ENCODE measurements at regions of chr5 and their contacts with region 1.

Region 1: DNA sequence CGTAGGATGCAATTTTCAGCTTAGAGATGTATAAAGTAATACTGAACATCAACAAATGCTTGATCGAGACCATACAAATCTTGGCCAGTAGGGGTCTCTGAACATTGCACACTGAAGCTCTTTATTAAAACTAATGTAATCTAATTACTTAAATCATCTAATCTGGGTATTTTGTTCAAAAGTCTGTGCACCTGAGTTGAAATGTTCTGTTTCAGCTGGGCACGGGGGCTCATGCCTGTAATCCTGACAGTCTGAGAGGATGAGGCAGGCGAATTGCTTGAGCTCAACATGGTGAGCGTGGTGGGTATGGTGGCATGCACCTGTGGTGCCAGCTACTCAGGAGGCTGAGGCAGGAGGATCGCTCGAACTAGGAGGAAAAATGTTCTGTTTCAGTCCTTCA is 41.0 kb downstream of the ESM1 start:
- DNase-seq: peak; percentile 45 to 54 (median 54)
- H3K4me3 ChIP-seq: no peak overlapping the region
- H3K4me3 Mint-ChIP-seq: no peak overlapping the region
- H3K27ac ChIP-seq: no peak overlapping the region
- H3K27ac Mint-ChIP-seq: no peak overlapping the region
- H3K4me1 ChIP-seq: no peaks in the 10 kb centered on the region
- H3K4me1 Mint-ChIP-seq: peaks cover 0 to 2% (median under 1%) of the 10 kb centered on the region in 4 donors
- H3K27me3 ChIP-seq: no peaks in the 10 kb centered on the region
- H3K27me3 Mint-ChIP-seq: no peaks in the 10 kb centered on the region

Region 2: GRCh38 chr5:54401515-54401914 is 542.8 kb before region 1 on chr5:
- CTCF ChIA-PET with region 1: no interaction called
- POLR2A ChIA-PET with region 1: no interaction called
- intact Hi-C with region 1: no loop called
- DNase-seq: no peak
- H3K4me3 ChIP-seq: no peak overlapping the region
- H3K4me3 Mint-ChIP-seq: no peak overlapping the region
- H3K27ac ChIP-seq: no peak overlapping the region
- H3K27ac Mint-ChIP-seq: no peak overlapping the region
- H3K4me1 ChIP-seq: no peaks in the 10 kb centered on the region
- H3K4me1 Mint-ChIP-seq: no peaks in the 10 kb centered on the region
- H3K27me3 ChIP-seq: no peaks in the 10 kb centered on the region
- H3K27me3 Mint-ChIP-seq: peaks cover 1 to 4% of the 10 kb centered on the region in 2 donors

Region 3: DNA sequence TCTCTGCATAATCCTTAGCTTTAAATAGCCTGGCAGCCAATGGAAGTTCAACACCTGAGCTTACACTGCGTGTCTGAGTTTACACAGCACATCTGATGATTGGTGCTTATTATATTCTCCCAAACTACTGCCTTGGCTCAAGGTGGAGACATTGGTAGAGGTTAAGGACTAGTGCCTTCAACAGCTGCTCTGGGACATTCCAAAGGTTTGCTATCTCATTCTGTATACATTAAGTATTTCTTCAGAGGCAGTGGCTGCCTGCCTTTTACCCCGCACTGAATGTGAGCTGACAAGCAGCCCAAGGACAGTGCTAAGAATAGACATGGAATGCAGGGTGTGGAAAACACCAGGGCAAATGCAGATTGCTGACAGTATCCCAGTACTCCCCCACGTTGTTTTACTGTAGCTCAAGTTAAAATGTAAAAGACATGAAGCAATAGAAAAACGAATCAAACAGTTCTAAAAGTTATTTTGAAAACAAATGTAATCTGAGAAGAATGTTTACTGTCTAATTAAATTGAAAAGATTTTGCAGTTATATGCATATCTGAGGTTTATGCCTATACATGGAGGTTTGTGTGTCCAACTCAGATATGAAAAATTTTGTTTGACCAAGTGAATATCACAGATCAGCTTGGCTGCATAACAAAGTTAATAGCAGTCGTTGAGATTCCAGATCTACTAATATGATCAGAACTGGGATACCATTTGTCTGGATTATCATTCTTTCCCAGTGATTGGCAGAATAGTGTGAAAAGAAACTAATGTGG is 487.1 kb before region 1 on chr5:
- CTCF ChIA-PET with region 1: no interaction called
- POLR2A ChIA-PET with region 1: no interaction called
- intact Hi-C with region 1: no loop called
- DNase-seq: no peak
- H3K4me3 ChIP-seq: no peak overlapping the region
- H3K4me3 Mint-ChIP-seq: no peak overlapping the region
- H3K27ac ChIP-seq: no peak overlapping the region
- H3K27ac Mint-ChIP-seq: no peak overlapping the region
- H3K4me1 ChIP-seq: no peaks in the 10 kb centered on the region
- H3K4me1 Mint-ChIP-seq: no peaks in the 10 kb centered on the region
- H3K27me3 ChIP-seq: no peaks in the 10 kb centered on the region
- H3K27me3 Mint-ChIP-seq: peaks cover 17 to 33% of the 10 kb centered on the region in 2 donors

Region 4: GRCh38 chr5:54930736-54931135 is 13.6 kb before region 1 on chr5:
- CTCF ChIA-PET with region 1: interaction called, 11 read pairs
- POLR2A ChIA-PET with region 1: no interaction called
- intact Hi-C with region 1: no loop called
- DNase-seq: no peak
- H3K4me3 ChIP-seq: no peak overlapping the region
- H3K4me3 Mint-ChIP-seq: no peak overlapping the region
- H3K27ac ChIP-seq: no peak overlapping the region
- H3K27ac Mint-ChIP-seq: no peak overlapping the region
- H3K4me1 ChIP-seq: no peaks in the 10 kb centered on the region
- H3K4me1 Mint-ChIP-seq: no peaks in the 10 kb centered on the region
- H3K27me3 ChIP-seq: peaks cover 9% of the 10 kb centered on the region
- H3K27me3 Mint-ChIP-seq: peaks cover 10 to 19% of the 10 kb centered on the region in 2 donors

Region 5: DNA sequence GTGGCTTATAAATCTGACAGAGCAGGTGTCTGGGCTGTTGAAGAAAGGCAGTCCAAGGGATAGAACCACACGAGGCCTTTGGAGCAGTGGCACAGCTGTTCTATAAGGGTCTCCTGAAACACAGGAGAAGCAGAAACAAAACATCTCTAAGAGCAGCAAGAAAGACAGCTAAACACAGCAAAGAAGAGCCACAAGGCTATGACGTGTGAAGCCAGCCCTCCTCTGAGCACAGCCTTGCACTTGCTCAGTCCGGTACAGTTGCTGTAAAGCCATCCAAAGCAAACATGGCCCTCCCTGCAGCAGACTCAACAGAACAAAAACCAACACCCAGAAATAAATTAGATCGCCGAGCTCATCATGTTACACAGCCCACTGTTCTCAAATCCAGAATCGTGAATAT is 77.0 kb after region 1 on chr5:
- CTCF ChIA-PET with region 1: interaction called, 24 read pairs
- POLR2A ChIA-PET with region 1: no interaction called
- intact Hi-C with region 1: no loop called
- DNase-seq: no peak
- H3K4me3 ChIP-seq: no peak overlapping the region
- H3K4me3 Mint-ChIP-seq: peak overlapping the region in 6 of 8 donors; percentile 3 to 71 (median 46)
- H3K27ac ChIP-seq: no peak overlapping the region
- H3K27ac Mint-ChIP-seq: peak overlapping the region in 6 of 7 donors; percentile 49 to 92 (median 77)
- H3K4me1 ChIP-seq: peaks cover 46% of the 10 kb centered on the region
- H3K4me1 Mint-ChIP-seq: peaks cover 31 to 65% (median 50%) of the 10 kb centered on the region in 4 donors
- H3K27me3 ChIP-seq: no peaks in the 10 kb centered on the region
- H3K27me3 Mint-ChIP-seq: no peaks in the 10 kb centered on the region

Region 6: GRCh38 chr5:55096861-55097260 is 152.5 kb after region 1 on chr5:
- CTCF ChIA-PET with region 1: interaction called, 92 read pairs
- POLR2A ChIA-PET with region 1: interaction called, 14 read pairs
- intact Hi-C with region 1: no loop called
- DNase-seq: peak; percentile 56 to 72 (median 63)
- H3K4me3 ChIP-seq: peak overlapping the region in 1 of 2 donors; percentile 47
- H3K4me3 Mint-ChIP-seq: peak overlapping the region; percentile 20 to 89 (median 69)
- H3K27ac ChIP-seq: no peak overlapping the region
- H3K27ac Mint-ChIP-seq: peak overlapping the region; percentile 74 to 96 (median 90)
- H3K4me1 ChIP-seq: peaks cover 65% of the 10 kb centered on the region
- H3K4me1 Mint-ChIP-seq: peaks cover 72 to 92% (median 82%) of the 10 kb centered on the region in 4 donors
- H3K27me3 ChIP-seq: no peaks in the 10 kb centered on the region
- H3K27me3 Mint-ChIP-seq: no peaks in the 10 kb centered on the region

Region 7: DNA sequence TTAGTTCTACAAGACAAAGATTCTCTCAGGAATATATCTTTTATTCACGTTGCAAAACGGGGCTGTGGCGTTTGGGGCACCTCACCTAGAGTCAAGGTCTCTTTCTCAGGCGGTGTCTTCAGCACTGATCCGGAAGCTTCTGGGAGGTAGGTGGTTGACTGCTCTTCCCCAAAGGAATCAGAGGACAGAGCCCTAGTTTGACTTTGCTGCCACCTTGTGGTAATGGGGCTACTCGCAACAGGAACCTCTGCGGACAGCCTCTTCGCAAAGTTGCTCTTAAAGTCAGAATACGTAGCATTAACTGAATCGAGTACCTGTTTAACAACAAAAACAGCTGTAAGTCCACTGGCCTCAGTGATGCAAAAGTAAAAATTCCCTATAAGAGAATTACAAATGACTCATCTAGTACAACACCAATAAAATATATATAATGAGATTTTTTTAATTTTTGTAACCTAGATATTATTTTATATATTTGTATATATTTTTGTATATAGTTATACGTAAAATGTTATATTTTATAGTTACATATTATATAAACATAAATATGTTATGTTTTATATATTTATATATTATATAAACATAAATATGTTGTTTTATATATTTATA is 202.3 kb after region 1 on chr5:
- CTCF ChIA-PET with region 1: interaction called, 210 read pairs
- POLR2A ChIA-PET with region 1: interaction called, 21 read pairs
- intact Hi-C with region 1: loop called (anchors 1 kb)
- DNase-seq: peak; percentile 77 to 83 (median 80)
- H3K4me3 ChIP-seq: no peak overlapping the region
- H3K4me3 Mint-ChIP-seq: peak overlapping the region in 7 of 8 donors; percentile 11 to 70 (median 48)
- H3K27ac ChIP-seq: no peak overlapping the region
- H3K27ac Mint-ChIP-seq: no peak overlapping the region
- H3K4me1 ChIP-seq: peaks cover 18% of the 10 kb centered on the region
- H3K4me1 Mint-ChIP-seq: peaks cover 12 to 25% (median 15%) of the 10 kb centered on the region in 4 donors
- H3K27me3 ChIP-seq: no peaks in the 10 kb centered on the region
- H3K27me3 Mint-ChIP-seq: peaks cover 0 to 3% of the 10 kb centered on the region in 2 donors

Measured in CD4-positive, alpha-beta memory T cell (primary cell).